ENCODE measurements at regions of chr12 and their contacts with region 1.

Region 1: GRCh38 chr12:120971299-120972179 is 6.8 kb upstream of the HNF1A start:
- DNase-seq: peak; percentile 56
- ATAC-seq: peak; percentile 90
- H3K4me3 Mint-ChIP-seq: no peak overlapping the region
- H3K27ac Mint-ChIP-seq: no peak overlapping the region
- H3K4me1 Mint-ChIP-seq: peaks cover 9% of the 10 kb centered on the region
- H3K27me3 Mint-ChIP-seq: peaks cover 2% of the 10 kb centered on the region

Region 2: DNA sequence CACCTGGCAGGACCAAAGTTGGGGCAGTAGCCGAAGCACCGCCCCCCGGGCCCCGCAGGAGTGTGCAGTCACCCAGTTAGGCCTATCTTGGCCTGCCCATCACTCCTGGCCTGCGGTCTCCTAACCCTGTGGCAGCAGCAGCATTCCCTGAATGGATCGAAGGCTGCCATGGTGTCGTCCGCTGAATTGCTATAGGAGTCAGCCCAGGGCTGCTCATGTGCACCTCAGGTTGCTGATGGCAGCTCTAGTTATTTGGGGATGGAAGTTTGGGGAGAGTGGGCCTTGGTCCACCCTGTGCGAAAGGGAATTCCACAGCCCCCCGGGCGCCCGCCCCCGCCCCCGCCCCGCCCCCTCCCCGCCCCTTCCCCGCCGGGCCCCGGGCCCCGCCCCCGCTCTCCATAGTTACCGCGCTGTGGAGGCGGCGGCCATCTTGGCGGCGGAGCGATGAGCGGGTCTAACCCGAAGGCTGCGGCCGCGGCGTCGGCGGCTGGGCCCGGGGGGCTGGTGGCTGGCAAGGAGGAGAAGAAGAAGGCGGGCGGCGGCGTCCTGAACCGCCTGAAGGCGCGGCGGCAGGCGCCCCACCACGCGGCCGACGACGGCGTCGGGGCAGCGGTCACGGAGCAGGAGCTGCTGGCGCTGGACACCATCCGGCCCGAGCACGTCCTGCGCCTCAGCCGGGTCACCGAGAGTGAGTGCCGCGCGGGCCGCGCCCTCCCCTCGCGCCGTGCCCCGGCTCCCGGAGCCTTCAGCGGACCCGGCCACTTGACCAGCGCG is 261.3 kb before region 1 on chr12 and contains the start of gene UNC119B:
- CTCF ChIA-PET with region 1: interaction called, 15 read pairs
- POLR2A ChIA-PET with region 1: no interaction called
- DNase-seq: peak; percentile 77
- ATAC-seq: peak; percentile 83
- H3K4me3 Mint-ChIP-seq: peak within 1 kb of the TSS; percentile 87
- H3K27ac Mint-ChIP-seq: peak within 1 kb of the TSS; percentile 81
- H3K4me1 Mint-ChIP-seq: peaks cover 37% of the 10 kb centered on the region
- H3K27me3 Mint-ChIP-seq: no peaks in the 10 kb centered on the region
- total RNA-seq, gene UNC119B: 18.5 to 18.9 TPM

Region 3: DNA sequence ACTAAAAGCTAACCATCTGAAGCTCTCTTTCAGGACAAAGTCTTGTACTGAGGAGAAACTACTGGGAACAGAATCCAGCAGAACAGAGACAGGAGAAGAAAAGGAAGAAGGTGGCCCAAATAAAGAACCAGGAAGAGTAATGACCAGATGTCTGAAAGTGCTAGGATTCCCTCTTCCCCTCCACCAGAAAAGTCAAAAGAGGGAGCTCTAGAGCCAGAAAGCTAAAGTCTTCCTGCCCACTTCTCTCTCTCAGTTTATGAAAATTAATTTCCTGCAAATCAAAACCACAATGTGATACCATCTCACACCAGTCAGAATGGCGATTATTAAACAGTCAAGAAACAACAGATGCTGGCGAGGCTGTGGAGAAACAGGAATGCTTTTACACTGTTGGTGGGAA is 114.6 kb before region 1 on chr12:
- CTCF ChIA-PET with region 1: interaction called, 23 read pairs
- POLR2A ChIA-PET with region 1: interaction called, 3 read pairs
- DNase-seq: no peak
- ATAC-seq: peak; percentile 61
- H3K4me3 Mint-ChIP-seq: no peak overlapping the region
- H3K27ac Mint-ChIP-seq: no peak overlapping the region
- H3K4me1 Mint-ChIP-seq: peaks cover 35% of the 10 kb centered on the region
- H3K27me3 Mint-ChIP-seq: no peaks in the 10 kb centered on the region

Region 4: DNA sequence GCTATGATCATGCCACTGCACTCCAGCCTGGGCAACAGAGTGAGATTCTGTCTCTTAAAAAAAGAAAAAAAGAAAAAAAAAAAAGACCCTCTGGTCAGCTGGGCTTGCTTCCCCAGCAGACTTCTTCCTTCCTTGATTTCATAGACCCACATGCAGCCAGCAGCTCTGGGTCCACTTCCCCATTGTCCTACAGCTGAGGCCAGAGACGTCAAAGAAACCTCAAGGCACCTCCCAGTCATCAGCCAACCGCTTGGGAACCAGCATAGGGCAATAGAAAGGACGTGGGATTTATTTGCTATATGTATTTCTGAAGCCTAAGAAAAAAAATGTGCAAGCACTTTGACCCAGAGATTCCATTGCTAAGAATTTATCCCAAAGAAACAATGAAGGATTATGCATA is 32.0 kb before region 1 on chr12:
- CTCF ChIA-PET with region 1: interaction called, 31 read pairs
- POLR2A ChIA-PET with region 1: interaction called, 3 read pairs
- DNase-seq: no peak
- ATAC-seq: no peak
- H3K4me3 Mint-ChIP-seq: no peak overlapping the region
- H3K27ac Mint-ChIP-seq: no peak overlapping the region
- H3K4me1 Mint-ChIP-seq: peaks cover 1% of the 10 kb centered on the region
- H3K27me3 Mint-ChIP-seq: peaks cover 9% of the 10 kb centered on the region

Region 5: DNA sequence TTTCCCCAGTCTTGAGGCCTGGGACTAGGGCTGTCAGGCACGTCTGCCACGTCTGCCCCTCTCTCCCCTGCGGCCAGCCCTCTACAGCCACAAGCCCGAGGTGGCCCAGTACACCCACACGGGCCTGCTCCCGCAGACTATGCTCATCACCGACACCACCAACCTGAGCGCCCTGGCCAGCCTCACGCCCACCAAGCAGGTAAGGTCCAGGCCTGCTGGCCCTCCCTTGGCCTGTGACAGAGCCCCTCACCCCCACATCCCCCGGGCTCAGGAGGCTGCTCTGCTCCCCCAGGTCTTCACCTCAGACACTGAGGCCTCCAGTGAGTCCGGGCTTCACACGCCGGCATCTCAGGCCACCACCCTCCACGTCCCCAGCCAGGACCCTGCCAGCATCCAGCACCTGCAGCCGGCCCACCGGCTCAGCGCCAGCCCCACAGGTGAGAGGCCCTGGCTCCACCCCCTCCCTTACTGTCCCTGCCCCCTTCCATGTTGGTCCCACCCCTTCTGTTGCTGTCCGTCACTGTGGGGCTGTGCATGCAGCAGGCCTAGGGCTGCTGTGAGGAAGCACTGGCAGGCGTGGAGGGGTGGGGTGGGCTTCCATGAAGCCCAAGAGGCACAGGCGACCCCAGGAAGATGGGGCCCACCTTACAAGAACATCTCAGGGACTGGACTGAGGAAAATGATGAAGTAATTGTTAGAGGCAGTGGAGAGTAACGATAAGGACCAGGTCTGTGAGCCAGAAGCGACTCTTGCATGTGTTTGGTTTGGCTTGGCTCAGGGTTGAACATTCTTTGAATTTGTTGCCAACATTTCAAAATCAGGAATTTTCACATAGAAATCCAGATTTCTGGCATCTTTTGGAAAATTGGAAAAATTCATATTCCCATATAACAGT is 27.9 kb after region 1 on chr12:
- CTCF ChIA-PET with region 1: no interaction called
- POLR2A ChIA-PET with region 1: no interaction called
- DNase-seq: no peak
- ATAC-seq: no peak
- H3K4me3 Mint-ChIP-seq: no peak overlapping the region
- H3K27ac Mint-ChIP-seq: no peak overlapping the region
- H3K4me1 Mint-ChIP-seq: peaks cover 8% of the 10 kb centered on the region
- H3K27me3 Mint-ChIP-seq: peaks cover 14% of the 10 kb centered on the region

Region 6: DNA sequence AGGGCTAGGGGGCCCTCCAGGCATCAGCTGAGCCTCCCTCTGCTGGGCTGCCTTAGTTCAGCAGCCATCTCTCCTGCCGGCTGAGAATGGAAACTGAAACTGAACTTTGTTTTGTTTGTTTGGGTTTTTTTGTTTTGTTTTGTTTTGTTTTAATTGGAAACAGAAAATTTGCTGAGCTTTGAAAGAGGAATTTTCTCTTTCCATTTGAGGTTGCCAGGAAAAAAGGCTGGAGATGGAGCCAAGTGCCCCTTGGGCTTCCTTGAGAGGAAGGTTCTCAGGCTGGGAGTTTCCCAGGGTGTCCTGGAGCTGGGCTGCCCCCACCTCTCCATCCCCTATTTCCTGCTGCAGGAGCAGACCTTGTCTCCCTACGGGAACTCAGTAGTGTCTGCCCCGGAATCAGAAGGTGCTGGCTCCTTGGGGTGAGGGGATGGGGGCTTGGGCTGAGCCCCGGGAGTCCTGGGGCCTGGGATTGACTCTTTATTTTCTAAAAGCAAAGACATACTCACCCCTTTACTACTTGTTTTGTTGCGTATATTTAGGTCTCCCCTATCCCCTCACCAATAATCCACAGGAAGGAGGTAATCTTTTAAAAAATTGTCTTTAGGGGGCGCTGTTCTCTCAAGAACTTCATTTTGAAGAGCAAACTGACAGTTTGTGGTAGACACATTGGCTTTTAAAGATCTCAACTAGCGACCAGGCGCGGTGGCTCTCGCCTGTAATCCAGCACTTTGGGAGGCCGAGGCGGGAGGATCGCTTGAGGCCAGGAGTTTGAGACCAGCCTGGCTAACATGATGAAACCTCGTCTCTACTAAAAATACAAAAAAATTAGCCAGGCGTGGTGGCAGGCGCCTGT is 88.8 kb after region 1 on chr12:
- CTCF ChIA-PET with region 1: interaction called, 14 read pairs
- POLR2A ChIA-PET with region 1: no interaction called
- DNase-seq: peak; percentile 83
- ATAC-seq: peak; percentile 98
- H3K4me3 Mint-ChIP-seq: peak overlapping the region; percentile 82
- H3K27ac Mint-ChIP-seq: peak overlapping the region; percentile 99
- H3K4me1 Mint-ChIP-seq: peaks cover 31% of the 10 kb centered on the region
- H3K27me3 Mint-ChIP-seq: peaks cover 2% of the 10 kb centered on the region

Region 7: GRCh38 chr12:121214855-121215745 is 243.6 kb after region 1 on chr12:
- CTCF ChIA-PET with region 1: no interaction called
- POLR2A ChIA-PET with region 1: no interaction called
- DNase-seq: no peak
- ATAC-seq: no peak
- H3K4me3 Mint-ChIP-seq: peak overlapping the region; percentile 4
- H3K27ac Mint-ChIP-seq: peak overlapping the region; percentile 67
- H3K4me1 Mint-ChIP-seq: peaks cover 54% of the 10 kb centered on the region
- H3K27me3 Mint-ChIP-seq: no peaks in the 10 kb centered on the region

Measured in activated CD8-positive, alpha-beta T cell treated with anti-CD3 and anti-CD28 coated beads, Interleukin-2, amount 10 ng/mL, durations not matched to agents 7 days and 5 days (primary cell).